Transverse colon (tissue), 4 donors: ENCODE measurements at regions of chr16 and their contacts with region 1.

Region 1: DNA sequence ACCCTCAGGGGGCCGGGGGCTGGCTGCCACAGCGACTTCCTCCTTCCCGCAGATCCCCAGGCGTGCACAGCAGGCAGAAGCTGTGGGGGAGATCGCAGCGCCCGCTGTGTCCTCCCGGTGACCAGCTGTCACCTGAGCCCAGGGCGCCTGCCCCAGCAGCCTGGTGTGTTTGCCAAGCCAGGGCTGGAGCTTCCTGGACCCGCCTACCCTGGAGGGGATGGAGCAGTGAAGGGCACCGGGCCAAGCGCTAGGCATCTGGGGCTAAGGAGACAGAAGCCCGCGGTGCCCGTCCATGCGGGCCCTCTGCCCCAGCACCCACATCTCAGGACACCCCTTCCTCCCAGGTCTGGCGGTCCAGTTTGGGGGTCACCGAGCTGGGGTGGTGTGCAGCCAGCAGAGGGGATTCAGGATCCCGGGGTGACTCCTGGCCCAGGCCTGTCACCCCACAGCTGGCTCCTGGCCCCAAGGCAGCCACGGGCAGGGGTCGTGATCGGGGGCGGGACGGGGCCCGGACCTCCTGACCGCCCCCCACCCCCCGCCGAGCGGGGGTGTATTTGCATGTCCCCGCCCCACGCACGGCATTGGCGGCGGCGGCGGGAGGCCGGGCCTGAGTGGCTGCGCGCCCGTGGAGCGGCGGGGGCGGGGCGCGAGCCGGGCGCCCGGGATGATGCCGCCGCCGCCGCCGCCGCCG is at the start of gene RAB26:
- DNase-seq: peak; percentile 91
- H3K4me3 ChIP-seq: peak within 1 kb of the TSS; percentile 20 to 64 (median 43)
- H3K27ac ChIP-seq: peak within 1 kb of the TSS; percentile 80 to 94 (median 82)
- H3K4me1 ChIP-seq: peaks cover 39 to 56% (median 51%) of the 10 kb centered on the region in 4 donors
- H3K27me3 ChIP-seq: no peaks in the 10 kb centered on the region
- CTCF ChIP-seq: no peak
- EP300 ChIP-seq: no peak
- POLR2A ChIP-seq: peak; percentile 67
- total RNA-seq, gene RAB26: 8.3 to 28.4 (median 14.2) TPM

Region 2: DNA sequence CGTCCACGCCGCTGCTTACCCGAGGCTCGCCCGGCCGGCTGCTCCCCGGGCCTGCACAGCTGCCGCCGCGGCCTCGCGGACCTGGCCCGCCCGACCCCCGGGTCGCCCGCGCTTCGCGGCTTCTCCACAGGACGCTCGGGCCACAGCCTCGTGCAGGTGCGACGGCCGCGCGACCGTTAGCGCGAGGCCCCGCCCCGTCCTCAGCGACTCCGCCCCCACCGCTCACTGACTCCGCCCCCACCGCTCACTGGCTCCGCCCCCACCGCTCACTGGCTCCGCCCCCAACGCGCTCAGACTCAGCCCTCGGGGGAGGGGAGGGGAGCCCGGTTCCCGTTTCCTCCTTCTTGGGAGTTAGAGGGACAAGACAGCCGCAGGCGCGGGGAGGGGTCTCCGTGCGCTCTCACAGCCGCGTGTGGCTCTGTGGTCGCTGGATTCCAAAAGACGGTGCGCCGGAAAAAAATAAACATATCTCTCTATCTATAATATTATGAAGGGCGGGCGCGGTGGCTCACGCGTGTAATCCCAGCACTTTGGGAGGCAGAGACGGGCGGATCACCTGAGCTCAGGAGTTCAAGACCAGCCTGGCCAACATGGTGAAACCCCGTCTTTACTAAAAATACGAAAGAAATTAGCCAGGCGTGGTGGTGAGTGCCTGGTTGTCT is 276.0 kb before region 1 on chr16 and contains the start of gene MEIOB:
- in situ Hi-C with region 1: no loop called
- intact Hi-C with region 1: no loop called
- DNase-seq: peak; percentile 30
- H3K4me3 ChIP-seq: peak within 1 kb of the TSS in 2 of 4 donors; percentile 19 to 26
- H3K27ac ChIP-seq: no peak within 1 kb of the TSS
- H3K4me1 ChIP-seq: peaks cover 0 to 16% (median 6%) of the 10 kb centered on the region in 4 donors
- H3K27me3 ChIP-seq: peaks cover 39% of the 10 kb centered on the region
- CTCF ChIP-seq: no peak
- EP300 ChIP-seq: no peak
- POLR2A ChIP-seq: no peak
- total RNA-seq, gene MEIOB: not detected

Region 3: GRCh38 chr16:2009789-2010510 is 138.2 kb before region 1 on chr16 and contains the start of gene ZNF598:
- in situ Hi-C with region 1: loop called in 2 of 4 experiments (anchors 10 to 25 kb)
- intact Hi-C with region 1: no loop called
- DNase-seq: peak; percentile 86
- H3K4me3 ChIP-seq: peak within 1 kb of the TSS; percentile 78 to 98 (median 85)
- H3K27ac ChIP-seq: peak within 1 kb of the TSS; percentile 93 to 98 (median 94)
- H3K4me1 ChIP-seq: peaks cover 24 to 45% (median 37%) of the 10 kb centered on the region in 4 donors
- H3K27me3 ChIP-seq: no peaks in the 10 kb centered on the region
- CTCF ChIP-seq: peak in 1 of 5 experiments; percentile 25
- EP300 ChIP-seq: no peak
- POLR2A ChIP-seq: peak; percentile 98
- total RNA-seq, gene ZNF598: 28.3 to 145 (median 42.0) TPM

Region 4: GRCh38 chr16:2023098-2023925 is 124.8 kb before region 1 on chr16:
- in situ Hi-C with region 1: loop called (anchors 10 to 25 kb)
- intact Hi-C with region 1: loop called (anchors 5 kb)
- DNase-seq: peak; percentile 97
- H3K4me3 ChIP-seq: peak overlapping the region in 2 of 4 donors; percentile 15 to 38
- H3K27ac ChIP-seq: peak overlapping the region; percentile 74 to 77 (median 75)
- H3K4me1 ChIP-seq: peaks cover 16 to 49% (median 40%) of the 10 kb centered on the region in 4 donors
- H3K27me3 ChIP-seq: peaks cover 36% of the 10 kb centered on the region
- CTCF ChIP-seq: peak; percentile 98 to 99 (median 99)
- EP300 ChIP-seq: no peak
- POLR2A ChIP-seq: peak; percentile 42

Region 5: DNA sequence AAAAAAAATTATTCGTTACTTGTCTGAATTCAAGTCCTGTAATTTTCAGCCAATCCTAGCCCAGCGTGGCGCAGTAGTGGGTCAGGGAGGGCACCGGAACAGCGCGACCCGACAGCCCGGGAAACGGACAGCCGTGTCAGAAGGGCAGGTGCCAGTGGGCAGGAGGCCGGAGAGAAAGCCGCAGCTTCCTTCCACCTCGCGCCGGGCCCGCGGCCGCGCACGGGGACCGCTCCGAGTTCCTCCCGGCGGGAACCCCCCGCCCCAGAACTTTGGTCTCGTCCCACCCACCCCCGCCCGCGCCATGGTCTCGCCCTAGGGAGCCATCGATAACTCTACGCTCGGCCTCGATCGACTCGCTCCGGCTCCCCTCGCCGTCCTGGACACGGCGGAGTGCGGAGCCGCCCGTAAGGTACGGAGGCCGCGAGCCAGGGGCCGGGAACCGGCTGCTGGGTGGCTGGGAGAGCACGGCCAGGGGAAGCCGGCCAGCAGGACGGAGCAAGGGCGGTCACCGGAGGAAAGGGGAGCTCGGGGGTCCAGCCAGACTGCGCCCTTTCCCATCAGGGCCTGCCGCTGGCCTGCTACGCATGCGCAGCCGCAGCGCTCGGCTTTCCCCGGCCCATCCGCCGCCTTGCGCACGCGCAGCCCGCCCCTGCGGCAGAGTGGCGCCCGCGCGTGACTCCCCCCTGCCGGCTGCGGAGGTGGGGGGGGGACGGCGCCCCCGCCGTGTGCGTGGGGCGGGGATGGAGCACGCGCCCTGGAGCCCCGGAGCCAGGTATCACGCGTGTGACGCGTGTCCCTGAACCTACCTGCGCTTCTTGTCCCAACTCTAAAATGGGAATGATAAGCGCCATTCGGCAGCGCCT is 57.2 kb after region 1 on chr16 and contains the start of gene MLST8:
- in situ Hi-C with region 1: no loop called
- intact Hi-C with region 1: no loop called
- DNase-seq: peak; percentile 89
- H3K4me3 ChIP-seq: peak within 1 kb of the TSS; percentile 62 to 90 (median 84)
- H3K27ac ChIP-seq: peak within 1 kb of the TSS; percentile 94 to 99 (median 95)
- H3K4me1 ChIP-seq: peaks cover 11 to 18% (median 13%) of the 10 kb centered on the region in 4 donors
- H3K27me3 ChIP-seq: no peaks in the 10 kb centered on the region
- CTCF ChIP-seq: peak in 1 of 5 experiments; percentile 17
- EP300 ChIP-seq: no peak
- POLR2A ChIP-seq: peak; percentile 89
- total RNA-seq, gene MLST8: 50.8 to 81.8 (median 73.1) TPM

Region 6: DNA sequence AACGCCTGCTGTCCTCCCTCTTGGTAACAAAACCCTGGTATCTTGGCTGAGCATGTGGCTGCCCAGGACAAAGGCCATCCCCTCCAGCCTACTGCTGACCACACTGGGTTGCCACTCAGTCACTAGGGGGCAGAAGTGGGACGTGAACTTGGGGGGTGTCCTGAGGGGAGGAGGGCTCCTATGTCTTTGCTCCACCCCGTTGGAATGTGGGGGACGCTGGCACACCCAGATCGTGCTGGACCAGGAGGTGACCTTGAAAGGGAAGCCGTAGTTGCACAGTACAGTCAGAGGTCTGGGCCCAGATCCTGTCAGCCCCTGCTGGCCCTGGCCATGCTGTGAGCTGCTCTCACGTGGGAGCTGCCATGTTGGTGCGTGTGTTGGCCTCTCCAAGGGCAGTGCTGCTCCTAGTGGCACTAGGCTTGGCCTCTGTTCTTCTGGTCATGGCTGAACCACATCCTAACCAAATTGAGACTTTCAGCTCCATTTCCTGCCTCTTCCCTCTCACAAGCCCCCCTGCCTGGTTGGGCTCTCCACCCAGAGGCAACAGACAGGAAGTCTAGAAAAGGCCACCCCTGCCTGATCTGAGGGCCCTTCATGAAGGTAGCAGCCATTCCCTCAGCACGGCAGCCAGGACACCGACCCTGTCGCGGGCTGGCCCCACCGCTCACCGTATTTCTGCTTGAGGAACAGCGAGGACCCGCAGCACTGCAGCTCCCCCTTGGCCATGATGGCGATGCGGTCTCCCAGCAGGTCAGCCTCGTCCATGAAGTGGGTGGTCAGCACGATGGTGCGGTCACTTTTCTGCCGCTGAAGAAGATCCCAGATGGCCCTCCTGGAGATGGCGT is 148.8 kb after region 1 on chr16:
- in situ Hi-C with region 1: no loop called
- intact Hi-C with region 1: no loop called
- DNase-seq: no peak
- H3K4me3 ChIP-seq: no peak overlapping the region
- H3K27ac ChIP-seq: no peak overlapping the region
- H3K4me1 ChIP-seq: no peaks in the 10 kb centered on the region
- H3K27me3 ChIP-seq: no peaks in the 10 kb centered on the region
- CTCF ChIP-seq: peak in 4 of 5 experiments; percentile 16 to 20 (median 16)
- EP300 ChIP-seq: no peak
- POLR2A ChIP-seq: no peak